ENCODE measurements at regions of chr15 and their contacts with region 1.

Region 1: GRCh38 chr15:63157118-63157843 is at the start of gene RPS27L:
- DNase-seq: peak; percentile 80 to 90
- ATAC-seq: peak; percentile 93 to 97 (median 94)
- H3K4me3 ChIP-seq: peak within 1 kb of the TSS; percentile 69
- H3K4me3 Mint-ChIP-seq: peak within 1 kb of the TSS; percentile 99
- H3K27ac ChIP-seq: peak within 1 kb of the TSS; percentile 80
- H3K27ac Mint-ChIP-seq: peak within 1 kb of the TSS; percentile 95 to 97
- H3K4me1 ChIP-seq: peaks cover 6% of the 10 kb centered on the region
- H3K4me1 Mint-ChIP-seq: peaks cover 14 to 15% of the 10 kb centered on the region in 2 donors
- H3K27me3 ChIP-seq: no peaks in the 10 kb centered on the region
- H3K27me3 Mint-ChIP-seq: no peaks in the 10 kb centered on the region
- CTCF ChIP-seq: no peak
- total RNA-seq, gene RPS27L: 50.4 to 63.3 (median 52.2) TPM

Region 2: GRCh38 chr15:63006032-63006878 is 151.0 kb before region 1 on chr15:
- intact Hi-C with region 1: no loop called
- DNase-seq: no peak
- ATAC-seq: no peak
- H3K4me3 ChIP-seq: no peak overlapping the region
- H3K4me3 Mint-ChIP-seq: no peak overlapping the region
- H3K27ac ChIP-seq: no peak overlapping the region
- H3K27ac Mint-ChIP-seq: no peak overlapping the region
- H3K4me1 ChIP-seq: no peaks in the 10 kb centered on the region
- H3K4me1 Mint-ChIP-seq: no peaks in the 10 kb centered on the region
- H3K27me3 ChIP-seq: no peaks in the 10 kb centered on the region
- H3K27me3 Mint-ChIP-seq: peaks cover 6 to 8% of the 10 kb centered on the region in 2 donors
- CTCF ChIP-seq: no peak

Region 3: GRCh38 chr15:63048115-63048775 is 109.0 kb before region 1 on chr15:
- intact Hi-C with region 1: loop called (anchors 2 kb)
- DNase-seq: peak; percentile 83 to 93
- ATAC-seq: peak; percentile 86 to 92 (median 87)
- H3K4me3 ChIP-seq: peak overlapping the region; percentile 61
- H3K4me3 Mint-ChIP-seq: peak overlapping the region; percentile 96
- H3K27ac ChIP-seq: peak overlapping the region; percentile 51
- H3K27ac Mint-ChIP-seq: peak overlapping the region; percentile 77 to 85
- H3K4me1 ChIP-seq: peaks cover 22% of the 10 kb centered on the region
- H3K4me1 Mint-ChIP-seq: peaks cover 39% of the 10 kb centered on the region in 2 donors
- H3K27me3 ChIP-seq: peaks cover 30% of the 10 kb centered on the region
- H3K27me3 Mint-ChIP-seq: peaks cover 35 to 36% of the 10 kb centered on the region in 2 donors
- CTCF ChIP-seq: peak; percentile 98

Region 4: GRCh38 chr15:63065262-63066221 is 91.7 kb before region 1 on chr15:
- intact Hi-C with region 1: no loop called
- DNase-seq: no peak
- ATAC-seq: no peak
- H3K4me3 ChIP-seq: no peak overlapping the region
- H3K4me3 Mint-ChIP-seq: no peak overlapping the region
- H3K27ac ChIP-seq: no peak overlapping the region
- H3K27ac Mint-ChIP-seq: no peak overlapping the region
- H3K4me1 ChIP-seq: no peaks in the 10 kb centered on the region
- H3K4me1 Mint-ChIP-seq: peaks cover 5 to 10% of the 10 kb centered on the region in 2 donors
- H3K27me3 ChIP-seq: no peaks in the 10 kb centered on the region
- H3K27me3 Mint-ChIP-seq: no peaks in the 10 kb centered on the region
- CTCF ChIP-seq: no peak

Region 5: GRCh38 chr15:63122002-63122893 is 35.0 kb before region 1 on chr15:
- intact Hi-C with region 1: loop called (anchors 5 kb)
- DNase-seq: peak; percentile 82 to 90
- ATAC-seq: peak; percentile 88 to 97 (median 90)
- H3K4me3 ChIP-seq: peak overlapping the region; percentile 96
- H3K4me3 Mint-ChIP-seq: peak overlapping the region; percentile 90
- H3K27ac ChIP-seq: peak overlapping the region; percentile 93
- H3K27ac Mint-ChIP-seq: peak overlapping the region; percentile 83 to 87
- H3K4me1 ChIP-seq: peaks cover 4% of the 10 kb centered on the region
- H3K4me1 Mint-ChIP-seq: peaks cover 12 to 19% of the 10 kb centered on the region in 2 donors
- H3K27me3 ChIP-seq: no peaks in the 10 kb centered on the region
- H3K27me3 Mint-ChIP-seq: no peaks in the 10 kb centered on the region
- CTCF ChIP-seq: no peak

Region 6: DNA sequence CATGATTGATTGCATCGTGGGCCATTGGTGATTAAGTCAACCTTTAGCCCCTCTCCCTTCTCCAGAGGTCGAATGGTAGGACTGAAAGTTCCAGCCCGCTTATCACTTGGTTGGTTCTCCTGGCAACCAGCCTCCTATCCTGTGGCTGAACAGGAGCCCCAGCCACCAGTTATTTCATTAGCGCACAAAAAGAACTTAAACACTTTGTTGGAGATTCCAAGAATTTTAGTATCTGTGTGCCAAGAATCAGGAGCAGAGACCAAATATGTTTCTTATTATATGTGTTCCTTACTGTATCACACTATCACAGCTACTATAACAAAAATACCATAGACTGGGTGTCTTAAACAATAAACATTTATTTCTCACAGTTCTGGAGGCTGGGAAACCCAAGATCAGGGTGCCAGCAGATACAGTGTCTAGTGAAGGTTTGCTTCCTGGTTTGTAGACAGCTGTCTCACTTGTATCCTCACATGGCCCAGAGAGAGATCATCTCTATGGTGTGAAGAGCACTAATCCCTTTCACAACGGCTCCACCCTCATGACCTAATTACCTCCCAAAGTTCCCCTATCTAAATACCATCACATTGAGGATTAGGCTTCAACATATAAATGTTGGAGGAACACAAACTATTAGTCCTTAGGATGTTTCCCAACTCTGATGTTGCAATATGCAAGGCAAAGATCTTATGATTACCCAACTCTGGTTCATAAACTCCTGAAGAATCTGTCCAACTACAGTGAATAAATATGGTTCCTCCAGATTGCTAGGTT is 89.6 kb after region 1 on chr15:
- intact Hi-C with region 1: loop called (anchors 5 kb)
- DNase-seq: peak in 1 of 2 donors; percentile 38
- ATAC-seq: peak; percentile 81 to 90 (median 82)
- H3K4me3 ChIP-seq: no peak overlapping the region
- H3K4me3 Mint-ChIP-seq: peak overlapping the region; percentile 52
- H3K27ac ChIP-seq: peak overlapping the region; percentile 14
- H3K27ac Mint-ChIP-seq: peak overlapping the region; percentile 87 to 92
- H3K4me1 ChIP-seq: peaks cover 19% of the 10 kb centered on the region
- H3K4me1 Mint-ChIP-seq: peaks cover 83% of the 10 kb centered on the region in 2 donors
- H3K27me3 ChIP-seq: no peaks in the 10 kb centered on the region
- H3K27me3 Mint-ChIP-seq: no peaks in the 10 kb centered on the region
- CTCF ChIP-seq: no peak

Measured in natural killer cell (primary cell).